ENCODE measurements at regions of chr7 and their contacts with region 1.

Region 1: DNA sequence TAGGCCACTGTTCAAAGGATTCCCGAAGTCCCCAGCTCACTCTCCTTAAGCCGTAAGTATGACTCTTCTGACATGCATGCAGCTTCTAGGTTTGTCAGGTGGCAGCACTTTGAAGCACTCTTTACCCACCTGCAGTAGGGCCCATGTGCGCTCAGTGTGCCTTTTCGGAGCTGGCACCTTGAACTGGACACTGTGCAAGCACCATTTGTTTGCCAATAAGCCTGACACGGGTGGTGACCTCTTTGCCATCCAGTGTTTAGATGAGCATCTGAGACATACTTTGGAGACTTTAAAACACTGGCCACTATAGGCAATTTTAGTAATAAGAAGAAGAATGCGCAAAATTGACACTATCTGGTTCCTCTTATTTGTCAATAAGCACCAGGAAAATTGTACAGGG is 45.7 kb upstream of the GSAP start:
- DNase-seq: no peak
- H3K4me3 ChIP-seq: no peak overlapping the region
- H3K27ac ChIP-seq: no peak overlapping the region
- H3K4me1 ChIP-seq: no peaks in the 10 kb centered on the region
- H3K27me3 ChIP-seq: no peaks in the 10 kb centered on the region
- CTCF ChIP-seq: no peak
- POLR2A ChIP-seq: no peak

Region 2: GRCh38 chr7:77488986-77489385 is 27.1 kb after region 1 on chr7:
- intact Hi-C with region 1: loop called (anchors 1 kb)
- DNase-seq: no peak
- H3K4me3 ChIP-seq: no peak overlapping the region
- H3K27ac ChIP-seq: no peak overlapping the region
- H3K4me1 ChIP-seq: no peaks in the 10 kb centered on the region
- H3K27me3 ChIP-seq: no peaks in the 10 kb centered on the region
- CTCF ChIP-seq: no peak
- POLR2A ChIP-seq: no peak

Region 3: GRCh38 chr7:78985509-78985908 is 1523.7 kb after region 1 on chr7:
- intact Hi-C with region 1: no loop called
- DNase-seq: no peak
- H3K4me3 ChIP-seq: no peak overlapping the region
- H3K27ac ChIP-seq: no peak overlapping the region
- H3K4me1 ChIP-seq: no peaks in the 10 kb centered on the region
- H3K27me3 ChIP-seq: no peaks in the 10 kb centered on the region
- CTCF ChIP-seq: no peak
- POLR2A ChIP-seq: no peak

Measured in breast epithelium (tissue), 4 donors.